ENCODE measurements at regions of chr9 and their contacts with region 1.

Region 1: DNA sequence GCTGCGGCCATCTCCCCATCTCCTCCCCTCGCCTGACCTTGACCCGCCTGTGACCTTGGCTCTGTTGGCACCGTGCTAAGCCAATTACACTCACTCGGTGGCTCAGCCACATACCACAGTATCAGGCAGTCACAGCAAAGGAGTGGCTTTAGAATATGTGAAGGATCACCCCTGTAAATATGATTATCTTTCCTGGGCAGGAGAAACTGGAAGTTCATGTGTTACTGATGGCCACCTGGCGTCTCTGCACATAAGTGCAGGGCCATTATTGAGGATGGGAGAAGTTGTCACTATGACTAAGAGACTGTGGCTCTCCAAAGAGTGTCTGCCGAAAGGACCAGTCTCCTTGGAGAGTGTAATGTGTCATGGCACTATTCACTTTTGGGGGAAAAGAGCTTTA is 116.9 kb upstream of the S1PR3 start:
- DNase-seq: peak in 1 of 5 donors; percentile 39
- ATAC-seq: peak in 3 of 4 donors; percentile 36 to 55 (median 46)
- H3K4me3 ChIP-seq: no peak overlapping the region
- H3K27ac ChIP-seq: peak overlapping the region in 5 of 12 donors; percentile 0 to 78 (median 37)
- H3K4me1 ChIP-seq: peaks cover 0 to 29% (median 11%) of the 10 kb centered on the region in 12 donors
- H3K27me3 ChIP-seq: no peaks in the 10 kb centered on the region
- CTCF ChIP-seq: peak in 8 of 12 donors; percentile 15 to 38 (median 28)
- POLR2A ChIP-seq: no peak

Region 2: DNA sequence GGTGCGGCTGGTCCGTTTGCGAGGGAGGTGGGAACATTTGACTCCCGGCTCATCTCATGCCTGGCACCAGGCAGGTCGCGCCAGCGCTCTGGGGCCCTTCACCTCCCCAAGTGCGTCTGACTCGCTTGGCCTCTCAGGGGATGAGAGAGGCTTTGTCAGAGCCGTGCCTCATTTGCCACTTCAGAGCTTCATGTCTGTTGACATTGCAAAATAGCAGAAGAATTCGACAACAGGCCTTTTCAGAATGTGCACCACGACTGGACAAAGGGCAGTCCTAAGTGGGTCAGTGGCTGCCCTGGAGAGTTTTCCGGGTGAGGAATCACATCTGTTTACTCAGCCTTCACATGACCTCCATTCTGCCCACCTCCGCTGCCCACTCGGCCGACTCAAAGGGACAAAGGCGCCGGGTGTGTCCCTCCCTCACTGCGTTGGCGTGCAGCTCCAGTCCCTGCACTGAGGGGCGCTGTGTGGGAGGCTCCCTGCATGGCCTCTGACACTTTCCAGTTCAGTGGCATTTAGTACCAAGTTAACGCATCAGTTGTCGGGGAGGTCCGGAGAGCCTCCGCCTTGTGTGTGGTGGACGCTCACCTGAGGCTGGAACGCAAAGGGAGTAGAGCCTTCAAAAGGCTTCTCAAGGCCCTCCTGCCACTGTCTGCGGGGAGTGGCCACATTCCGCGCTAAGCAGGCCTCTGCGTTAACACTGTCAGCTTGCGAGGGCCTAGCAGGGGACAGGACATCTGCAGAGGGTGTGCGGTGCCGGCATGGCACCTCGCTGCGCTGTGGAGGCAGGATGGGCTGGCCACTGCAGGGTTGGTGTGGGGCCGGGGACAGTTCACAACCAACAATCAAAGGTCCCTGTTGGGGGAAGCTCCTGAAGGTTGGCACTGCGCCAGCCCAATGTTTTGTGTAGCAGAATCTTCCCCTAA is 167.9 kb before region 1 on chr9:
- intact Hi-C with region 1: no loop called
- DNase-seq: no peak
- ATAC-seq: no peak
- H3K4me3 ChIP-seq: no peak overlapping the region
- H3K27ac ChIP-seq: no peak overlapping the region
- H3K4me1 ChIP-seq: no peaks in the 10 kb centered on the region
- H3K27me3 ChIP-seq: no peaks in the 10 kb centered on the region
- CTCF ChIP-seq: no peak
- POLR2A ChIP-seq: no peak

Region 3: GRCh38 chr9:88781628-88782391 is 92.6 kb before region 1 on chr9:
- intact Hi-C with region 1: loop called in 5 of 10 experiments (anchors 5 to 10 kb)
- DNase-seq: peak in 4 of 5 donors; percentile 45 to 69 (median 60)
- ATAC-seq: peak; percentile 59 to 84 (median 79)
- H3K4me3 ChIP-seq: no peak overlapping the region
- H3K27ac ChIP-seq: peak overlapping the region; percentile 1 to 72 (median 52)
- H3K4me1 ChIP-seq: peaks cover 0 to 43% (median 27%) of the 10 kb centered on the region in 12 donors
- H3K27me3 ChIP-seq: no peaks in the 10 kb centered on the region
- CTCF ChIP-seq: peak; percentile 23 to 66 (median 49)
- POLR2A ChIP-seq: no peak

Region 4: DNA sequence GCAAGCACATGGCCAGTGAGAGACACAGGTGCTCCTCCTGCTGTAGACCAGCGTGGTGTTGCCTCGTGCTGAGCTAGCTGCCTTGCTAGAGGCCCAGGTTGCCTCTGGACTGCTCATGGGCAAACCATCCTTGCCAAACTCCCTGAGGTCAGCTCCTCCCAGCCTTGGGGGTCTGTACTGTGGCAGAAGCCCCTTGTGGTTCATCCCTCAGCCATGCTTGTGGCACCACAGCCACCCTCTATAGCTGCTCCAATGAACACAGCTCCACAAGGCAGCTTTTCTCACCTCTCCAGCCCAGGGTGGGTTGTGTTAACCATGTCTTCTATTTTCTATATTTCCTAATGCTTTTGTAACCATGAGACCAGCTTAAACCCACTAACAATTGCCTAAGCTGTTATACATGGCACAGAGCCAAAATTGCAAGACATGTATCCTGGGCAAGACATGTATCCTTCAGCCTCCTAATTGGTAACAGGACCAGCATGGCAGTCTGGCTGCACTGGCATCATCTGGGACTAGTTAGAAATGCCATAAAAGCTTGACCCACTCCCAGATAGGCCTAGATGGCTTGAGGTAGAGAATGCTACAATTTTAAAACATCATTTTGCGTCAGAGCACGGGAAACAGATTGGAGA is 66.2 kb before region 1 on chr9:
- intact Hi-C with region 1: loop called in 3 of 10 experiments (anchors 5 to 10 kb)
- DNase-seq: no peak
- ATAC-seq: no peak
- H3K4me3 ChIP-seq: no peak overlapping the region
- H3K27ac ChIP-seq: no peak overlapping the region
- H3K4me1 ChIP-seq: peaks cover 0 to 25% (median 0%) of the 10 kb centered on the region in 12 donors
- H3K27me3 ChIP-seq: peaks cover 0 to 4% (median 0%) of the 10 kb centered on the region in 9 donors
- CTCF ChIP-seq: no peak
- POLR2A ChIP-seq: no peak

Region 5: GRCh38 chr9:88814577-88814976 is 59.8 kb before region 1 on chr9:
- intact Hi-C with region 1: loop called in 5 of 10 experiments (anchors 2 to 10 kb)
- DNase-seq: peak; percentile 71 to 89 (median 74)
- ATAC-seq: peak; percentile 80 to 97 (median 96)
- H3K4me3 ChIP-seq: no peak overlapping the region
- H3K27ac ChIP-seq: peak overlapping the region; percentile 41 to 92 (median 76)
- H3K4me1 ChIP-seq: peaks cover 0 to 40% (median 16%) of the 10 kb centered on the region in 12 donors
- H3K27me3 ChIP-seq: peaks cover 0 to 17% (median 0%) of the 10 kb centered on the region in 9 donors
- CTCF ChIP-seq: no peak
- POLR2A ChIP-seq: no peak

Region 6: GRCh38 chr9:88835038-88835466 is 39.3 kb before region 1 on chr9:
- intact Hi-C with region 1: no loop called
- DNase-seq: no peak
- ATAC-seq: no peak
- H3K4me3 ChIP-seq: no peak overlapping the region
- H3K27ac ChIP-seq: peak overlapping the region in 2 of 12 donors; percentile 4 to 27
- H3K4me1 ChIP-seq: peaks cover 0 to 32% (median 0%) of the 10 kb centered on the region in 12 donors
- H3K27me3 ChIP-seq: peaks cover 0 to 74% (median 0%) of the 10 kb centered on the region in 9 donors
- CTCF ChIP-seq: no peak
- POLR2A ChIP-seq: no peak

Measured in heart left ventricle (tissue), 16 donors.